Activated T-helper 1 cell treated with anti-CD3 and anti-CD28 coated beads, Interleukin-12 subunit alpha, Interleukin-12 subunit beta, Interleukin-2, Interleukin-4 antibody, amounts not matched to agents 30 ng/mL and 10 ng/mL and 1 ng/mL, durations not matched to agents 14 hours and 24 hours and 36 hours (primary cell): ENCODE measurements at regions of chr3 and their contacts with region 1.

Region 1: DNA sequence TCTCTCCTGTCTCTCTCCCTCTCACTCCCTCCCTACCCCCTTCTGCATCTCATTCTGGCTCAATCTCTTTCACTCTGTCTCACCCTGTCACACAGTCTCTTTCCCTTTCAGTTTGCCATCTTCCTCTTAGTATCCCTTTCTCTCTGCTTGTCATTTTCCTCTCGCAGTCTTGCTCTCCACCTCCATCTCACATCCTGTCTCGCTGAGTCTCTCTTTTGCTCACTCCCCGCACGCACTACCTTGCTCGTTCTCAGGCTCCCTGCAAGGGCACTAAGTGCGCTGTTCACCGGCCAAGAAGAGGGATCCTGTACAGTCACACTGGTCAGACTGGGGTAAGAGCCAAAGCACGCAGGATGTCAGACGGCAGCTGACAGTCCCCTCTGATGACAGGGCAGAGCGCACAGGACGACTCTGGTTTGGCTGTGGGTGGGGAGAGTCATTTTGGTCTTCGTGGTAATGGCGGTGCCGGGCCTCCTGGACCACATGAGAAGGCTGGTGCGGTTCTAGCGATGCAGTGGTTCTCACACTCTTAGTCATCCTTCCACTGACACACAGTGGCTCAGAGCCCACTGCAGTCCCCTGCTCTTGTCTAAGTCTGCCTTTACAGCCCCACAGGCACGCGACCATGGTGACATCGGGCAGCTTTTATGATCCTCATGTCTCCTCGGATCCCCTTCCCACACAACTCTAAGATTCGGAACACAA is 356.8 kb downstream of the FOXP1 start:
- DNase-seq: peak; percentile 81
- H3K4me3 Mint-ChIP-seq: peak overlapping the region; percentile 79
- H3K27ac Mint-ChIP-seq: peak overlapping the region; percentile 91
- H3K4me1 Mint-ChIP-seq: peaks cover 29% of the 10 kb centered on the region
- H3K27me3 Mint-ChIP-seq: peaks cover 48% of the 10 kb centered on the region

Region 2: DNA sequence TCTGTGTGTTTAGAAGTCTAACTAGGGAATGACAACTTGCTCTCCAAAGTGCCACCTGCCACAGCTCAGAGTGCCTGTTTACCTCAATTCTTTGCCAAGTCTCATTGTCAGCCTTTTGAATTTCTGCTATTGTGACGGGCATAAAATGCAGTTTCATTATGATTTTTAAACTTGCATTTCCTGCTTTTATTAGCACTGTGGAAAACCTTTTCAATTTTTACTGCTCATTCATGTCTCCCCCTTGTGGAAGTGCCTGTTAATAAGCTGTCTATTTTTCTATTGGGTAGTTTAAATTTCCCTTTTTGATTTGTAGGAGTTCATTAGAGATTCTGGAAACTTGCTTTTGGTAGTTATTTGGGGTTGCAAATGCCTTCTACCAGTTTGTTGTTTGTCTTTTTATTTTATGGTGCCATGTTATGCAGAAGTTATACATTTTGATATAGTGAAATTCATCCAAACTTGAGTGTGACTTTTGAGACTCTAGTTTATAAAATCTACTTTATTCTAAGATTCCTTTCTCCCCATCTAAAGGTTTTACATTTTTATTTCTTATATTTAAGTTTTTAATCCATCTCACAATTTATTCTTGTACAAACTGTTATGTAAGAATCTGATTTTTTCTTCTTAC is 1787.0 kb before region 1 on chr3:
- intact Hi-C with region 1: loop called (anchors 5 kb)
- DNase-seq: no peak
- H3K4me3 Mint-ChIP-seq: no peak overlapping the region
- H3K27ac Mint-ChIP-seq: no peak overlapping the region
- H3K4me1 Mint-ChIP-seq: peaks cover 78% of the 10 kb centered on the region
- H3K27me3 Mint-ChIP-seq: no peaks in the 10 kb centered on the region

Region 3: DNA sequence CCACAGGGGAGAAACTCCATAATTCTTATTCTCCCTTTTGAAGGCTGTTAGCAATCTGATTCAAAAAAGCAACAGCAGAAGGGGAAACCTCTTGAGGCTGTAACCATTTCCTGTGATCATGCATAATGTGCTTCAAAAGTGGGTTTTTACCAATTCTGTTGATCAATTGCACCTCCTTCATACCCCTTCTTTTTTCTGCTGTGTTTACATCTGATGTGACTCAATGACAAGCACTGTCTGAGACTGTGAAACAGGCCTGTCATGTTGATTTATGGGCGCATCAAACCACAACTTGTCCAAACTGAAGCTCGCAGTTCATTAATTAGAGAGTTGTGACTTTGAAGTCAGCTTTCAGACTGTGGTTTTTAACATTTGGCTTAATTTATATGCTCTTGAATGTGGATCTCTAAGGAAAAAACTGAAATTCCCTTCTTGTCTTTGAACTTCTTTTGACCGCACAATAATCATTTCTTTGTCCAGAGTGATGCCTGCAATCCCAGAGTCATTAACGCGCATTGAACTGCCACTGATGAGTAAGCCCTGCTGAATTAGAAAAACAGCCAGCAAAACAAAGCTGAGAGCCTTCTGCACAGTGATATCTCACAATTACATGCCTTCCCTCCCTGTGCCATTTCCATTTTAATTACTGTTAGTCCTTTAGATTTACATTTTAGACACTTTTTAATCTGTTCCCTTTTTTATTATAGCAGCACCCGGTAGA is 176.0 kb before region 1 on chr3:
- intact Hi-C with region 1: loop called (anchors 1 kb)
- DNase-seq: no peak
- H3K4me3 Mint-ChIP-seq: no peak overlapping the region
- H3K27ac Mint-ChIP-seq: peak overlapping the region; percentile 60
- H3K4me1 Mint-ChIP-seq: peaks cover 70% of the 10 kb centered on the region
- H3K27me3 Mint-ChIP-seq: peaks cover 5% of the 10 kb centered on the region

Region 4: DNA sequence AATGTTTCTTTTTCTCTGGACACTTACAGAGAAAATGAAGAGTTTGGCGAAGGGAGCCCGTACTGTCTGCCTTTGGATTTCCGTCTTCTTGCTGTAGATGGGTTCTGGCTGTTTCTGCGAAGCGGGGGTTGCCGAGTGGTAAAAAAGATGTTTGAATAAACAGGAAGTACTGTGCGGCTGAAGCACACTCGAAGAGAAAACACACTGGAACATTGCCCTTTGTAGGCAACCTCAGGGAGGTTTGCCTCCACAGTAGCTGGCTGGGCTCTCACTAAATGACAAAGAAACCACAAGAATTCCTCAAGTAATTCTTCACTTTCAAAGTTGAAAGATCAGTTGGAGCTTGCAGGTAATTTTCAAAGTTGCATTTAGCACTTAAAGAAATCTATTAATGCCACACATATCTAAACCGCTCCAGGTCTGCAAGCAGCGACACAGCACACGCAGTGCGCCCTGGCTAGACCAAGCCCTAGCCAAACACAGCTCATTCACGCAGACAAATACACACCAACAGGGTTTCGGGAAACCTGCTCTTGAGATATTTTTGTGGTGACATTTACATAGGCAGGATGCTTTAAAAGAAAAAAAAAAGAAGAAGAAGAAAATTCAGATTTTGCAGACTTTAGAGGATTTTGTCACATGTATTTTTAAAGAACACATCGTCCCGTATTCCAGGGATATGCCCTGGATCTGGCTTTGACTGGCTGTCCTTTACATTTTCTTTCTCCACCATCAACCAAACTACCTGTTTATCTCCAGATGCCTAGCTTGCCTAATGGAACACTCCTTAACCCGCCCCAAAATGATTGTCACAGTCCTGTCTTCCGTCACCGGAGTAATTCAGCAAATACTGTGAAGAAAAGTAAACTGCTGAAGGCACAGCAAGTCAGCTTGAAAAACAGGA is 96.0 kb before region 1 on chr3:
- intact Hi-C with region 1: loop called (anchors 1 kb)
- DNase-seq: peak; percentile 67
- H3K4me3 Mint-ChIP-seq: peak overlapping the region; percentile 89
- H3K27ac Mint-ChIP-seq: peak overlapping the region; percentile 93
- H3K4me1 Mint-ChIP-seq: peaks cover 65% of the 10 kb centered on the region
- H3K27me3 Mint-ChIP-seq: no peaks in the 10 kb centered on the region

Region 5: GRCh38 chr3:71305231-71306206 is 78.8 kb after region 1 on chr3:
- intact Hi-C with region 1: loop called (anchors 1 kb)
- DNase-seq: no peak
- H3K4me3 Mint-ChIP-seq: peak overlapping the region; percentile 87
- H3K27ac Mint-ChIP-seq: peak overlapping the region; percentile 63
- H3K4me1 Mint-ChIP-seq: peaks cover 79% of the 10 kb centered on the region
- H3K27me3 Mint-ChIP-seq: peaks cover 53% of the 10 kb centered on the region

Region 6: GRCh38 chr3:71444028-71444860 is 217.5 kb after region 1 on chr3:
- intact Hi-C with region 1: loop called (anchors 1 kb)
- DNase-seq: peak; percentile 71
- H3K4me3 Mint-ChIP-seq: peak overlapping the region; percentile 74
- H3K27ac Mint-ChIP-seq: peak overlapping the region; percentile 95
- H3K4me1 Mint-ChIP-seq: peaks cover 73% of the 10 kb centered on the region
- H3K27me3 Mint-ChIP-seq: peaks cover 8% of the 10 kb centered on the region